ENCODE measurements at regions of chr15 and their contacts with region 1.

Region 1: DNA sequence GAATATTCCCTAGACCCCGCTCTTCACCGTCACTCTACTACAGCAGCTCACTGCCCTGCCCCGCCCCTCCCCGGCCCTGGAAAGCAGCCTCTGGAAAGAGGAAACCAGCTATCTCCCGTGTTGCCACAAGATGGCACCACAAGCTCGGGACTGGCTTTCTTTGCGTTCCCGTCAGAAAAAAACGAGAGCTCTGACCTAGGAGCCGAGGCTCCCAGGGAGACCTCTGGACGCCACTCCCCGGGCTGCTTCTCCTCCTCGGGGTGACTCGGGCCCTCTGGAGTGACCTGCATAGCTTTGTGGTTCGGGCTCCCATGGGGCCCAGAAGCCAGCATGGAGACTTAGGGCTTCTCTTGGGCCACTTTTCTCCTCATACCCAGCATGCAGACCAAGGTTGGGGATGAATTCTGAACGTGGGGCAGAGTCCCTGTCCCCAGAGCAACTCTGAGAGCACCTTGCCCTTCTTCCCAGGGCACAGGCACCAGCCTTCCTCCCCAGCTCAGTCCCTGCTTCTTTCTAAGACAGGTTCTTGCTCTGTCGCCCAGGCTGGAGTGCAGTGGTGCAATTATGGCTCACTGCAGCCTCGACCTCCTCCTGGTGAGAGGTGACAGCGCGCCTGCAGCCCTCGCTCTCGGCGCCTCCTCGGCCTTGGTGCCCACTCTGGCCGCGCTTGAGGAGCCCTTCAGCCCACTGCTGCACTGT is 19.0 kb downstream of the STOML1 start:
- DNase-seq: peak; percentile 73 to 76 (median 76)
- H3K4me3 ChIP-seq: no peak overlapping the region
- H3K4me3 Mint-ChIP-seq: peak overlapping the region in 3 of 8 donors; percentile 29 to 43 (median 39)
- H3K27ac ChIP-seq: no peak overlapping the region
- H3K27ac Mint-ChIP-seq: no peak overlapping the region
- H3K4me1 ChIP-seq: peaks cover 22% of the 10 kb centered on the region
- H3K4me1 Mint-ChIP-seq: peaks cover 11 to 36% (median 23%) of the 10 kb centered on the region in 4 donors
- H3K27me3 ChIP-seq: no peaks in the 10 kb centered on the region
- H3K27me3 Mint-ChIP-seq: peaks cover 16 to 20% of the 10 kb centered on the region in 2 donors

Region 2: DNA sequence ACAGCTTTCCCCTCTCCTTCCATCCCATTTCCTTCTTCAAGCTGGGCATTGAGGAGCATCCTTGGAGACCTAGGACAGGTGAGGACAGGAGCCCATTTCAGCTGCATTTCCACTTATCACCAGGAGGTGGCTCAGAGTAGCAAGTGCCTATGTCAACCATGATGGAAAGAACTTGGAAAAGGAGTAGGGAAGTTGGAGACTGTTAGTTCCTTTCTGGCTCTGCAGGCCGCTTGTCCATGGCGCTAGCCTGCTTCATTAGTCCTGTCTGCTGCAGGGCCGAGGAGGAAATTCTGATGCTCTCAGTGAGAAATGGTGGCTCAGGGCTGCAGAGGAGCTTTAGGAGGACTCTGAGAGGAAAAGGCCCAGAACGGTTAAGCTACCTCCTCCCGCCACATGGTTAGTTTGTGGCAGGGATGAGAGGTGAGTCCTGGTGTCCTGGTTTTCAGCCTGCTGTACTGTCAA is 296.0 kb before region 1 on chr15:
- CTCF ChIA-PET with region 1: no interaction called
- POLR2A ChIA-PET with region 1: no interaction called
- intact Hi-C with region 1: no loop called
- DNase-seq: peak; percentile 39 to 60 (median 48)
- H3K4me3 ChIP-seq: no peak overlapping the region
- H3K4me3 Mint-ChIP-seq: no peak overlapping the region
- H3K27ac ChIP-seq: no peak overlapping the region
- H3K27ac Mint-ChIP-seq: no peak overlapping the region
- H3K4me1 ChIP-seq: no peaks in the 10 kb centered on the region
- H3K4me1 Mint-ChIP-seq: peaks cover 0 to 5% (median 0%) of the 10 kb centered on the region in 4 donors
- H3K27me3 ChIP-seq: peaks cover 2% of the 10 kb centered on the region
- H3K27me3 Mint-ChIP-seq: peaks cover 17 to 24% of the 10 kb centered on the region in 2 donors

Region 3: GRCh38 chr15:73956739-73957051 is 16.4 kb before region 1 on chr15:
- CTCF ChIA-PET with region 1: interaction called, 168 read pairs
- POLR2A ChIA-PET with region 1: interaction called, 7 read pairs
- intact Hi-C with region 1: no loop called
- DNase-seq: no peak
- H3K4me3 ChIP-seq: no peak overlapping the region
- H3K4me3 Mint-ChIP-seq: no peak overlapping the region
- H3K27ac ChIP-seq: no peak overlapping the region
- H3K27ac Mint-ChIP-seq: peak overlapping the region in 2 of 7 donors; percentile 37 to 65
- H3K4me1 ChIP-seq: peaks cover 26% of the 10 kb centered on the region
- H3K4me1 Mint-ChIP-seq: peaks cover 18 to 40% (median 31%) of the 10 kb centered on the region in 4 donors
- H3K27me3 ChIP-seq: no peaks in the 10 kb centered on the region
- H3K27me3 Mint-ChIP-seq: no peaks in the 10 kb centered on the region

Region 4: GRCh38 chr15:74010929-74011540 is 37.9 kb after region 1 on chr15:
- CTCF ChIA-PET with region 1: interaction called, 11 read pairs
- POLR2A ChIA-PET with region 1: no interaction called
- intact Hi-C with region 1: no loop called
- DNase-seq: no peak
- H3K4me3 ChIP-seq: no peak overlapping the region
- H3K4me3 Mint-ChIP-seq: no peak overlapping the region
- H3K27ac ChIP-seq: no peak overlapping the region
- H3K27ac Mint-ChIP-seq: peak overlapping the region in 4 of 7 donors; percentile 38 to 70 (median 52)
- H3K4me1 ChIP-seq: peaks cover 72% of the 10 kb centered on the region
- H3K4me1 Mint-ChIP-seq: peaks cover 50 to 81% (median 68%) of the 10 kb centered on the region in 4 donors
- H3K27me3 ChIP-seq: no peaks in the 10 kb centered on the region
- H3K27me3 Mint-ChIP-seq: no peaks in the 10 kb centered on the region

Region 5: DNA sequence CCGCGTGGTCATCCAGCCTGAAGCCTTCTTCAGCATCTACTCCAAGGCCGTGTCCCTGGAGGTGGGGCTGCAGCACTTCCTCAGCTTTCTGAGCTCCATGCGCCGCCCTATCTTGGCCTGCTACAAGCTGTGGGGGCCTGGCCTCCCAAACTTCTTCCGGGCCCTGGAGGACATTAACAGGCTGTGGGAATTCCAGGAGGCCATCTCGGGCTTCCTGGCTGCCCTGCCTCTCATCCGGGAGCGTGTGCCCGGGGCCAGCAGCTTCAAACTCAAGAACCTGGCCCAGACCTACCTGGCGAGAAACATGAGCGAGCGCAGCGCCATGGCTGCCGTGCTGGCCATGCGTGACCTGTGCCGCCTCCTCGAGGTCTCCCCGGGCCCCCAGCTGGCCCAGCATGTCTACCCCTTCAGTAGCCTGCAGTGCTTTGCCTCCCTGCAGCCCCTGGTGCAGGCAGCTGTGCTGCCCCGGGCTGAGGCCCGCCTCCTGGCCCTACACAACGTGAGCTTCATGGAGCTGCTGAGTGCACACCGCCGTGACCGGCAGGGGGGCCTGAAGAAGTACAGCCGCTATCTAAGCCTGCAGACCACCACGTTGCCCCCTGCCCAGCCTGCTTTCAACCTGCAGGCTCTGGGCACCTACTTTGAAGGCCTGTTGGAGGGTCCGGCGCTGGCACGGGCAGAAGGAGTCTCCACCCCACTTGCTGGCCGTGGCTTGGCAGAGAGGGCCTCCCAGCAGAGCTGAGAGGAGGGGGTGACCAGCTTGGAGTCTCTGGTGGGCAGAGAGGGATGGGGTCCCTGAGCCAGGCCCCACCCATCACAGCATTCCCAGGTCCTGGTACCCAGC is 71.4 kb after region 1 on chr15:
- CTCF ChIA-PET with region 1: interaction called, 27 read pairs
- POLR2A ChIA-PET with region 1: interaction called, 7 read pairs
- intact Hi-C with region 1: loop called (anchors 5 kb)
- DNase-seq: no peak
- H3K4me3 ChIP-seq: no peak overlapping the region
- H3K4me3 Mint-ChIP-seq: no peak overlapping the region
- H3K27ac ChIP-seq: no peak overlapping the region
- H3K27ac Mint-ChIP-seq: peak overlapping the region in 1 of 7 donors; percentile 36
- H3K4me1 ChIP-seq: peaks cover 12% of the 10 kb centered on the region
- H3K4me1 Mint-ChIP-seq: peaks cover 5 to 17% (median 10%) of the 10 kb centered on the region in 4 donors
- H3K27me3 ChIP-seq: no peaks in the 10 kb centered on the region
- H3K27me3 Mint-ChIP-seq: no peaks in the 10 kb centered on the region

Region 6: DNA sequence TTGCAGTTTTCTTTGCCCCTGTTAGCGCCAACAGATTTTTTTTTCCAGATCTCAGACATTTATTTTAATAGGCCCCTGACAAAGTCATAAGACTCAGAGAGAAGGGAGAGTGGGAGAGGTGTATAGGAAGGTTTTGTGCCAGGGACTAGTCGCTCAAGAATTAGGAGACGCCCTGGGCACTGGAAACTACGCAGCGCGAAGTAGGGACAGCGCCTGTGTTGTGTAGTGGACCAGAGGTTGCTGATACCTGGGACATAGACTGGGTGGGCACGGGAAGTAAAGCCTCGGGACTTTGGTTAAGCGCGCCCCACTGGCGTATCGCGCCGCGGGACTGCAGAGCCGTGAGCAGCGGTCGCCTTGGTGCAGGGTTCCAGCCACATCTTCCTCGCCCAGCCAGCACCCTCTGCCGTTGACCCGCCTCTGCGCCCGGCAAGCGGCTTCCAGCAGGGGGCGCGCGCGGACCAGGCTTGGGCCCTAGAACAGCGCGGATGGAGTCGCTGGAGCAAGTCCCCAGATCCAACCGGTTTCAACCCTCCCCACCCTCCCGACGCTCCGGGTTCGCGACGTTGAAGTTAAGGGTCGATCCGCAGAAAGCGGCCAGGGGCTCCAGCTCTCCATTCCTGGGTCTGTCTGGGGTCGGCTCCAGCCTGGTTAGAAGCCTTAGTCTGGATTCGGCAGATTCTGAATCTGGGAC is 154.3 kb after region 1 on chr15:
- CTCF ChIA-PET with region 1: interaction called, 3 read pairs
- POLR2A ChIA-PET with region 1: no interaction called
- intact Hi-C with region 1: loop called (anchors 2 kb)
- DNase-seq: peak; percentile 69 to 76 (median 71)
- H3K4me3 ChIP-seq: no peak overlapping the region
- H3K4me3 Mint-ChIP-seq: peak overlapping the region in 6 of 8 donors; percentile 31 to 59 (median 39)
- H3K27ac ChIP-seq: no peak overlapping the region
- H3K27ac Mint-ChIP-seq: no peak overlapping the region
- H3K4me1 ChIP-seq: peaks cover 25% of the 10 kb centered on the region
- H3K4me1 Mint-ChIP-seq: peaks cover 2 to 29% (median 16%) of the 10 kb centered on the region in 4 donors
- H3K27me3 ChIP-seq: peaks cover 38% of the 10 kb centered on the region
- H3K27me3 Mint-ChIP-seq: peaks cover 50 to 60% of the 10 kb centered on the region in 2 donors

Region 7: DNA sequence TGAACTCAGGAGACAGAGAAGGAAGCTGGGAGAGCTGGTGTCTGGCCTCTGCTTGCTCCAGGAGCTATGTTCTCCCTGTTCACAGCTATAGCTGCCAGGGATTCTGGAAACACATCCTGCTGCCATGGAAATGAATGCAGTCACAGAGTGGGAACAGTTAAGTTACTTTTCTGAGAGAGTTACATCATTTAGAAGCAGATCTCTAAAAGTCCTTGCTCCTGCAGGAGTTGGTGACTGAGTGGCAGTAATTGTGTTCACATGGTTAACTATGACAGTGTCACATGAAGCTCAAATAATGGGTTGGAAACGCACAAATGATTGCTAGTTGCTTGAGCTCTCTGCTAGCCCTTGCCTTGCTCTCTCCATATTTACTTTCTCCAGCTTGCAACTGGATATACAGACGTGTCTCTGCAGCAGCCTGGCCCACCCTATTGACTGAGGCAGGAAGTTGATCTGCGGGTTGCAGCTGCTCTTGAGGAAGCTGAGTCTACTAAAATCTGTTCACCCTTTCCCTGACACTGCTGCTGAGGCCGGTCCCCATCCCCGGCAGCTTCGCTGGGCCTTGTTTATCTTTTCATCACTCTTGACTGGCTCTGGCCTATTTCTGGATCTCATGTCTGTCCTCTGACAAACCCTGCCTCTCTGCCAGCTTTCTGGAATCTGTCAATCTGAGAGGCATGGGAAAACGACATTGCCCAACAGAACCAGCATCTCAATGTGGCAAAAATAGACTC is 183.7 kb after region 1 on chr15:
- CTCF ChIA-PET with region 1: no interaction called
- POLR2A ChIA-PET with region 1: no interaction called
- intact Hi-C with region 1: no loop called
- DNase-seq: no peak
- H3K4me3 ChIP-seq: no peak overlapping the region
- H3K4me3 Mint-ChIP-seq: no peak overlapping the region
- H3K27ac ChIP-seq: no peak overlapping the region
- H3K27ac Mint-ChIP-seq: no peak overlapping the region
- H3K4me1 ChIP-seq: no peaks in the 10 kb centered on the region
- H3K4me1 Mint-ChIP-seq: peaks cover 0 to 5% (median 2%) of the 10 kb centered on the region in 4 donors
- H3K27me3 ChIP-seq: no peaks in the 10 kb centered on the region
- H3K27me3 Mint-ChIP-seq: peaks cover 15 to 24% of the 10 kb centered on the region in 2 donors